ENCODE measurements at regions of chr2 and their contacts with region 1.

Region 1: DNA sequence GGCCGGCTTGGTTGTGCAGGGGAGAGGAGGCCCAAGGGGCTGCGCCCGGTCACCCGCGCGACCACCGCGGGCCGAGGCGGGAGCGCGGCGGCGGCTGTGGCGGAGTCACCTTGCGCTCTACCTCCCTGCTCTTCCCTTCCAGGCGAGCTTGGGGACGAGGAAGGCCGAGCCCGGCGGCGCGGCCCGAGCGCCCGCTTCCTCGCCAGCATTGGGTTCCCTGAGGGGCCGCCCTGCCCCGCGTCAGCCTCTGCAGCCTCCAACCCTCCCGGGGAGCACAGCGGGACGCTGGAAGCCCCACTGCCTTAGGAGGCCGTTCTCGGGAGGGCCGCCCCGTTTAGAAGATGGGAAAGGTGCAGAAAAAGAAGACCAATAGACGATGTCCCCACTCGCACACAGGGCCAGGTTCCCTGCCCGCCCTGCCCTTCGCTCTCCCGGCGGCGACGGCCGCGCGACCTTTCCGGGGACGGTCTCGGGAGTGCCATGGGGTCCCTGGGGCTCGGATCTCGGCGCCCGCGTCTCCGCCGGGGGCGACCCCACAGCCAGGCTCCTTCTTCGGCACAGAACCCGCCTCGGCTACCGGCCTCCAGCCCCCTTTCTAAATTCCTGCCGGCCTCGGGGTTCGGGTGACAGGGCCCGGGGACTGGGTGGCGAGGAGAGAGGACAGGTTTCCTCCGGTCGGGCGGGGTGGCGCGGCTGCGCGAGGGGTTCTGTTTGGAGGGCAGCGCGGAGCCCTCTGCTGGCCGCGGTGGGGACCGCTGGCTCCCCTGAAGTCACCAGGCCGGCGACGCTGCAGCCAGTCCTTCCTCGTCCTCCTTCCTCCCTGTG is 85.5 kb downstream of the HS6ST1 start:
- DNase-seq: peak; percentile 83
- ATAC-seq: peak; percentile 98
- H3K4me3 ChIP-seq: peak overlapping the region in 4 of 5 experiments; percentile 61 to 77 (median 71)
- H3K4me3 Mint-ChIP-seq: peak overlapping the region; percentile 85
- H3K27ac ChIP-seq: no peak overlapping the region
- H3K27ac Mint-ChIP-seq: peak overlapping the region; percentile 41
- H3K4me1 ChIP-seq: peaks cover 5 to 8% of the 10 kb centered on the region in 2 donors
- H3K4me1 Mint-ChIP-seq: peaks cover 6% of the 10 kb centered on the region
- H3K27me3 ChIP-seq: peaks cover 0 to 13% (median 5%) of the 10 kb centered on the region in 4 experiments
- H3K27me3 Mint-ChIP-seq: peaks cover 3% of the 10 kb centered on the region
- CTCF ChIP-seq: peak; percentile 95

Region 2: DNA sequence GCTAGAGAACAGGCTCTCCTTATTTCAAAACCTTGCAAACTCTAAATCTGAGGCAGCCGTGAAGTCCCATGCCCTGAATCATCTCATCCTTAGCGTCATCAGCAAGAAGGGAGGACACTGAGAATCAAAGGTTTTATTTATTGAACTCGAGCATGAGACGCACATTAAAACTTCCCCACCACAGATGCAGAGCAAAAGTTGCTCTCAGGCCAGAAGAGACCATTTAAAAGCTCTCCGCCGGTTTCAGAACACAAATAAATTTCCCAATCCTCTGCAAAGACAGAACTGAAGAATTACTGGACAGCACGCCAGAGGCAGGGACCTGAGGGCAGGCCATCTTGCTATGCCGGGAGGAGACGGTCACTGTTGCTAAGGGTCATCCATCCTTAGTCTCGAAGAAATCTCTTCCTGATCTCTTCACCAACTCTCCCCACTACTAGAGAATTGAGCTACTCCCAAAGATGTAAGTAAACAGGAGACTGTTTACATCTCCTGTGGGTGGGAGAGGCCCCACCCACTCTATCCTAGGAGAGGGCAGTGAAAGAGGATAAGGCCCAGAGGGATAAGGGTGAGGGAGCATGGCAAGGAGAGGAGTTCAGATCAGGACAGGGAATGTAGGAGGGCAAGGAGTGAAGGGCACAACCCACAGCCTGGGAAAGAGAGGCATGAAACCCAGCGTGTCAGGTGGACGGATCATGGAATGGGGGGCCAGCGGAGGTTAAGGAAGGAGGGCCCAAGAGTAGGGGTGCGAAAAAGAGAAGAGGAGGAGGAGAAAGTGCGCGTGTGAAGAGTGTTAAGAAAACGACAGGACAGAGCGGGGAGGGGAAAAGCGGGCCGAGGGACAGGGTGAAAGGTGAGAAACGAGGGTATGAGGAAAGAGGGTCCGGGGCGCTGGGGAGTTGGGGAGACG is 348.5 kb before region 1 on chr2:
- CTCF ChIA-PET with region 1: interaction called, 4 read pairs
- POLR2A ChIA-PET with region 1: no interaction called
- intact Hi-C with region 1: loop called (anchors 2 kb)
- DNase-seq: peak; percentile 29
- ATAC-seq: no peak
- H3K4me3 ChIP-seq: peak overlapping the region in 4 of 5 experiments; percentile 21 to 55 (median 45)
- H3K4me3 Mint-ChIP-seq: peak overlapping the region; percentile 91
- H3K27ac ChIP-seq: peak overlapping the region in 1 of 2 donors; percentile 45
- H3K27ac Mint-ChIP-seq: peak overlapping the region; percentile 84
- H3K4me1 ChIP-seq: peaks cover 15 to 21% of the 10 kb centered on the region in 2 donors
- H3K4me1 Mint-ChIP-seq: peaks cover 33% of the 10 kb centered on the region
- H3K27me3 ChIP-seq: no peaks in the 10 kb centered on the region
- H3K27me3 Mint-ChIP-seq: no peaks in the 10 kb centered on the region
- CTCF ChIP-seq: no peak

Region 3: DNA sequence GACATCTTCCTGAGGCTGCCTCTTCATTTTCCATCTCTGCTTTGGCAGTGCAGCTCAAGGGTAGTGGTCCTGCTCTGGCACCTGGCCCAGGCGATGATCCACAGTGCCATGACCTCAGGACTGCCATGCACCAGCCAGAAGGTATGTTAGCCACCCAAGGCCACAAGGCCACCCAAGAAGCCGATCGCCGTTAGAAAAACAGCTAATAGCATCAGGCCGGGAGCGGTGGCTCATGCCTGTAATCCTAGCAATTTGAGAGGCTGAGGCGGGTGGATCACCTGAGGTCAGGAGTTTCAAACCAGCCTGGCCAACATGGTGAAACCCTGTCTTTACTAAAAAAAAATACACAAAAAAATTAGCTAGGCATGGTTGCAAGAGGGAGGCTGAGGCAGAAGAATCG is 170.6 kb before region 1 on chr2:
- CTCF ChIA-PET with region 1: interaction called, 13 read pairs
- POLR2A ChIA-PET with region 1: no interaction called
- intact Hi-C with region 1: loop called (anchors 1 kb)
- DNase-seq: no peak
- ATAC-seq: no peak
- H3K4me3 ChIP-seq: no peak overlapping the region
- H3K4me3 Mint-ChIP-seq: no peak overlapping the region
- H3K27ac ChIP-seq: no peak overlapping the region
- H3K27ac Mint-ChIP-seq: no peak overlapping the region
- H3K4me1 ChIP-seq: no peaks in the 10 kb centered on the region
- H3K4me1 Mint-ChIP-seq: no peaks in the 10 kb centered on the region
- H3K27me3 ChIP-seq: no peaks in the 10 kb centered on the region
- H3K27me3 Mint-ChIP-seq: peaks cover 2% of the 10 kb centered on the region
- CTCF ChIP-seq: no peak

Region 4: GRCh38 chr2:128178650-128179460 is 54.3 kb before region 1 on chr2:
- CTCF ChIA-PET with region 1: interaction called, 4 read pairs
- POLR2A ChIA-PET with region 1: no interaction called
- intact Hi-C with region 1: loop called (anchors 1 kb)
- DNase-seq: peak; percentile 59
- ATAC-seq: peak; percentile 39
- H3K4me3 ChIP-seq: no peak overlapping the region
- H3K4me3 Mint-ChIP-seq: no peak overlapping the region
- H3K27ac ChIP-seq: no peak overlapping the region
- H3K27ac Mint-ChIP-seq: no peak overlapping the region
- H3K4me1 ChIP-seq: no peaks in the 10 kb centered on the region
- H3K4me1 Mint-ChIP-seq: no peaks in the 10 kb centered on the region
- H3K27me3 ChIP-seq: no peaks in the 10 kb centered on the region
- H3K27me3 Mint-ChIP-seq: no peaks in the 10 kb centered on the region
- CTCF ChIP-seq: peak; percentile 66

Measured in B cell (primary cell).